CD4-positive, alpha-beta memory T cell (primary cell): ENCODE measurements at regions of chr20 and their contacts with region 1.

Region 1: GRCh38 chr20:1651268-1652058 is 6.1 kb downstream of the SIRPG start:
- DNase-seq: no peak
- H3K4me3 ChIP-seq: peak overlapping the region in 1 of 2 donors; percentile 20
- H3K4me3 Mint-ChIP-seq: peak overlapping the region; percentile 1 to 92 (median 81)
- H3K27ac ChIP-seq: no peak overlapping the region
- H3K27ac Mint-ChIP-seq: peak overlapping the region; percentile 31 to 87 (median 80)
- H3K4me1 ChIP-seq: peaks cover 79% of the 10 kb centered on the region
- H3K4me1 Mint-ChIP-seq: peaks cover 62 to 88% (median 71%) of the 10 kb centered on the region in 4 donors
- H3K27me3 ChIP-seq: no peaks in the 10 kb centered on the region
- H3K27me3 Mint-ChIP-seq: no peaks in the 10 kb centered on the region

Region 2: GRCh38 chr20:1622450-1622849 is 29.0 kb before region 1 on chr20:
- CTCF ChIA-PET with region 1: no interaction called
- POLR2A ChIA-PET with region 1: interaction called, 10 read pairs
- intact Hi-C with region 1: loop called (anchors 2 kb)
- DNase-seq: peak in 4 of 5 donors; percentile 27 to 45 (median 31)
- H3K4me3 ChIP-seq: no peak overlapping the region
- H3K4me3 Mint-ChIP-seq: peak overlapping the region in 7 of 8 donors; percentile 17 to 76 (median 62)
- H3K27ac ChIP-seq: no peak overlapping the region
- H3K27ac Mint-ChIP-seq: peak overlapping the region; percentile 11 to 90 (median 86)
- H3K4me1 ChIP-seq: peaks cover 71% of the 10 kb centered on the region
- H3K4me1 Mint-ChIP-seq: peaks cover 55 to 91% (median 67%) of the 10 kb centered on the region in 4 donors
- H3K27me3 ChIP-seq: no peaks in the 10 kb centered on the region
- H3K27me3 Mint-ChIP-seq: no peaks in the 10 kb centered on the region

Region 3: GRCh38 chr20:1663917-1664316 is 12.5 kb after region 1 on chr20:
- CTCF ChIA-PET with region 1: interaction called, 3 read pairs
- POLR2A ChIA-PET with region 1: interaction called, 37 read pairs
- intact Hi-C with region 1: loop called (anchors 1 kb)
- DNase-seq: peak in 1 of 5 donors; percentile 24
- H3K4me3 ChIP-seq: peak overlapping the region in 1 of 2 donors; percentile 44
- H3K4me3 Mint-ChIP-seq: peak overlapping the region in 7 of 8 donors; percentile 73 to 88 (median 81)
- H3K27ac ChIP-seq: peak overlapping the region; percentile 54
- H3K27ac Mint-ChIP-seq: peak overlapping the region; percentile 73 to 97 (median 91)
- H3K4me1 ChIP-seq: peaks cover 96% of the 10 kb centered on the region
- H3K4me1 Mint-ChIP-seq: peaks cover 72 to 93% (median 82%) of the 10 kb centered on the region in 4 donors
- H3K27me3 ChIP-seq: no peaks in the 10 kb centered on the region
- H3K27me3 Mint-ChIP-seq: no peaks in the 10 kb centered on the region

Region 4: DNA sequence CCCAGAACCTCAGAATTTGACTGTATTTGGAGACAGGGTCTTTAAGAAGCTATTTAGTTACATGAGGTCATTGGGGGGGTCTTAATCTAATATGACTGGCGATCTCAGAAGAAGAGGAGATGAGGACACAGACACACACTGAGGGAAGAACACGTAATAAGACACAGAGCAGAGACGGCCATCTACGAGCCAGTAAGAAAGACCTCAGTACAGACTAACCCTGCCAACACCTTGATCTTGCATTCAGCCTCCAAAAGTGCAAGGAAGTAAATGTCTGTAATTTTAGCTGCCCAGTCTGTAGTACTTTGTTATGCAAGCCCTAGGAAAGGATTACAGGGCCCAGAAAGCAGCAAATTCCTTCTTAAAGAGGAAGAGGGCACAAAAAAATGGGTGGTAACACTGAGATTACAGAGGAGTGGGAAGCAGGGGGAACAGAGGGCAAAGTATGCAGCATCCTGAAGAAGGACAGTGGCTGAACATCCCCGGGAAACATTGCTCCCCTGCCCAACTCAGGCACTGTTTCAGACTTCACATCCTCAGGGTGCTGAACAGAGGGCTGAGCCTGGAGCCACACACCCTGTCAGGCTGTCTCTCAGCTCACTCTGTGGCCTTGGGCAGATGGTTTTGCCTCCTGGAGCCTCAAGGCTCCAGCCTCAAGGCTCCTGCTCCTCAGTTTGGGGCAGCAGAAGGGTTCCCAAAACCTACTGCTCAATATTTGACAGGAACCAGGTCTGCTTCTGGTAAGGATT is 34.0 kb after region 1 on chr20:
- CTCF ChIA-PET with region 1: no interaction called
- POLR2A ChIA-PET with region 1: no interaction called
- intact Hi-C with region 1: loop called (anchors 5 kb)
- DNase-seq: peak in 1 of 5 donors; percentile 41
- H3K4me3 ChIP-seq: peak overlapping the region; percentile 34 to 52
- H3K4me3 Mint-ChIP-seq: peak overlapping the region; percentile 66 to 88 (median 77)
- H3K27ac ChIP-seq: peak overlapping the region; percentile 26
- H3K27ac Mint-ChIP-seq: peak overlapping the region; percentile 68 to 88 (median 82)
- H3K4me1 ChIP-seq: peaks cover 35% of the 10 kb centered on the region
- H3K4me1 Mint-ChIP-seq: peaks cover 18 to 47% (median 39%) of the 10 kb centered on the region in 4 donors
- H3K27me3 ChIP-seq: no peaks in the 10 kb centered on the region
- H3K27me3 Mint-ChIP-seq: no peaks in the 10 kb centered on the region

Region 5: GRCh38 chr20:1702328-1702727 is 50.9 kb after region 1 on chr20:
- CTCF ChIA-PET with region 1: no interaction called
- POLR2A ChIA-PET with region 1: no interaction called
- intact Hi-C with region 1: no loop called
- DNase-seq: no peak
- H3K4me3 ChIP-seq: no peak overlapping the region
- H3K4me3 Mint-ChIP-seq: no peak overlapping the region
- H3K27ac ChIP-seq: no peak overlapping the region
- H3K27ac Mint-ChIP-seq: no peak overlapping the region
- H3K4me1 ChIP-seq: peaks cover 3% of the 10 kb centered on the region
- H3K4me1 Mint-ChIP-seq: peaks cover 3 to 16% (median 7%) of the 10 kb centered on the region in 4 donors
- H3K27me3 ChIP-seq: no peaks in the 10 kb centered on the region
- H3K27me3 Mint-ChIP-seq: peaks cover 0 to 1% of the 10 kb centered on the region in 2 donors